K562 (cell line): ENCODE measurements at regions of chr19 and their contacts with region 1.

Region 1: GRCh38 chr19:13155472-13156359 is 5.5 kb downstream of the IER2 start:
- DNase-seq: peak; percentile 67 to 88 (median 75)
- ATAC-seq: peak; percentile 56
- H3K4me3 ChIP-seq: peak overlapping the region; percentile 98
- H3K27ac ChIP-seq: peak overlapping the region; percentile 95; the same call in 2 of the 3 replicates
- H3K4me1 ChIP-seq: peaks cover 11 to 49% of the 10 kb centered on the region in 2 experiments
- H3K27me3 ChIP-seq: no peaks in the 10 kb centered on the region
- CTCF ChIP-seq: no peak
- EP300 ChIP-seq: no peak
- POLR2A ChIP-seq: peak; percentile 90
- RAD21 ChIP-seq: no peak

Region 2: GRCh38 chr19:13099073-13099999 is 56.4 kb before region 1 on chr19:
- CTCF ChIA-PET with region 1: interaction called, 3 read pairs
- POLR2A ChIA-PET with region 1: interaction called, 16 read pairs
- in situ Hi-C with region 1: no loop called
- intact Hi-C with region 1: loop called (anchors 2 kb)
- DNase-seq: peak; percentile 45 to 88 (median 60)
- ATAC-seq: peak; percentile 10
- H3K4me3 ChIP-seq: peak overlapping the region; percentile 98
- H3K27ac ChIP-seq: peak overlapping the region; percentile 98
- H3K4me1 ChIP-seq: peaks cover 42 to 82% of the 10 kb centered on the region in 2 experiments
- H3K27me3 ChIP-seq: no peaks in the 10 kb centered on the region
- CTCF ChIP-seq: no peak
- EP300 ChIP-seq: no peak
- POLR2A ChIP-seq: no peak
- RAD21 ChIP-seq: no peak; a peak in 1 of 4 replicates

Region 3: GRCh38 chr19:13104360-13104847 is 51.3 kb before region 1 on chr19:
- CTCF ChIA-PET with region 1: no interaction called
- POLR2A ChIA-PET with region 1: interaction called, 16 read pairs
- in situ Hi-C with region 1: no loop called
- intact Hi-C with region 1: loop called (anchors 2 kb)
- DNase-seq: peak; percentile 67 to 82 (median 76)
- ATAC-seq: peak; percentile 44
- H3K4me3 ChIP-seq: no peak overlapping the region
- H3K27ac ChIP-seq: peak overlapping the region; percentile 98
- H3K4me1 ChIP-seq: peaks cover 16 to 48% of the 10 kb centered on the region in 2 experiments
- H3K27me3 ChIP-seq: no peaks in the 10 kb centered on the region
- CTCF ChIP-seq: peak; percentile 81 to 95 (median 84)
- EP300 ChIP-seq: no peak
- POLR2A ChIP-seq: peak; percentile 62
- RAD21 ChIP-seq: peak; percentile 61 to 74

Region 4: GRCh38 chr19:13132471-13133180 is 23.1 kb before region 1 on chr19:
- CTCF ChIA-PET with region 1: no interaction called
- POLR2A ChIA-PET with region 1: interaction called, 16 read pairs
- in situ Hi-C with region 1: no loop called
- intact Hi-C with region 1: no loop called
- DNase-seq: no peak
- ATAC-seq: peak; percentile 17; the same call in 1 of the 3 replicates
- H3K4me3 ChIP-seq: no peak overlapping the region
- H3K27ac ChIP-seq: peak overlapping the region; percentile 41; the same call in 1 of the 3 replicates
- H3K4me1 ChIP-seq: peaks cover 16 to 28% of the 10 kb centered on the region in 2 experiments
- H3K27me3 ChIP-seq: no peaks in the 10 kb centered on the region
- CTCF ChIP-seq: no peak
- EP300 ChIP-seq: no peak
- POLR2A ChIP-seq: no peak
- RAD21 ChIP-seq: no peak

Region 5: GRCh38 chr19:13169810-13170209 is 14.1 kb after region 1 on chr19:
- CTCF ChIA-PET with region 1: no interaction called
- POLR2A ChIA-PET with region 1: interaction called, 45 read pairs
- in situ Hi-C with region 1: no loop called
- intact Hi-C with region 1: no loop called
- DNase-seq: peak in 3 of 4 experiments; percentile 13 to 40 (median 39)
- ATAC-seq: no peak
- H3K4me3 ChIP-seq: no peak overlapping the region
- H3K27ac ChIP-seq: no peak overlapping the region
- H3K4me1 ChIP-seq: peaks cover 24 to 48% of the 10 kb centered on the region in 2 experiments
- H3K27me3 ChIP-seq: no peaks in the 10 kb centered on the region
- CTCF ChIP-seq: no peak
- EP300 ChIP-seq: no peak
- POLR2A ChIP-seq: no peak
- RAD21 ChIP-seq: no peak

Region 6: GRCh38 chr19:13262450-13262849 is 106.7 kb after region 1 on chr19:
- CTCF ChIA-PET with region 1: interaction called, 3 read pairs
- POLR2A ChIA-PET with region 1: interaction called, 8 read pairs
- in situ Hi-C with region 1: no loop called
- intact Hi-C with region 1: loop called (anchors 1 kb)
- DNase-seq: peak; percentile 57 to 73 (median 66)
- ATAC-seq: peak; percentile 88
- H3K4me3 ChIP-seq: no peak overlapping the region
- H3K27ac ChIP-seq: no peak overlapping the region
- H3K4me1 ChIP-seq: peaks cover 3 to 10% of the 10 kb centered on the region in 2 experiments; a peak in 3 of 5 replicates
- H3K27me3 ChIP-seq: peaks cover 22 to 41% of the 10 kb centered on the region in 2 experiments
- CTCF ChIP-seq: peak; percentile 60 to 74 (median 61); a peak in 5 of 6 replicates
- EP300 ChIP-seq: no peak
- POLR2A ChIP-seq: no peak
- RAD21 ChIP-seq: peak; percentile 64 to 76